MCF 10A (cell line): ENCODE measurements at regions of chr2 and their contacts with region 1.

Region 1: DNA sequence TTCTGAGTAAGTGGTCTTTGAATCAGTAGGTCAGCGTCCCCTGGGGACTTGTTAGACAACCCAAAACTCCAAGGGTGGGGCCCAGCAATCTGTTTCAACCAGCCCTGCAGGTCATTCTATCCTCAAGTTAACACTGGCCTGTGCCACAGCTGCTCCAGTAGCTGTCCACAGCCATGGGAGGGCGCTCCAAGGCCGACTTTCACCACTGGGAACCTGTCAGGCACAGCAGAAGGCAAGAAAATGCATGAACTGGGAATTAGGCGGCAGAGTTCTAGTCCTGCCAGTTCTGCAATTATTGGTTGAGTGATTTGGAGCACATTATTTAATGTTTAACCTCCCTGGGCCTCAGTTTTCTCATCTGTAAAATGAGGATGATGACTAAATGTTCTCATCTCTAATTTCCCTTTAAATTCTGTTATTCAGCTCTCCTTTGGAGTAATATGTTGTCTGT is 17.4 kb upstream of the MRPL33 start:
- DNase-seq: peak; percentile 82
- H3K4me3 Mint-ChIP-seq: peak overlapping the region; percentile 31
- H3K27ac Mint-ChIP-seq: no peak overlapping the region
- H3K4me1 Mint-ChIP-seq: peaks cover 42% of the 10 kb centered on the region
- H3K27me3 Mint-ChIP-seq: no peaks in the 10 kb centered on the region
- CTCF ChIP-seq: peak; percentile 95

Region 2: DNA sequence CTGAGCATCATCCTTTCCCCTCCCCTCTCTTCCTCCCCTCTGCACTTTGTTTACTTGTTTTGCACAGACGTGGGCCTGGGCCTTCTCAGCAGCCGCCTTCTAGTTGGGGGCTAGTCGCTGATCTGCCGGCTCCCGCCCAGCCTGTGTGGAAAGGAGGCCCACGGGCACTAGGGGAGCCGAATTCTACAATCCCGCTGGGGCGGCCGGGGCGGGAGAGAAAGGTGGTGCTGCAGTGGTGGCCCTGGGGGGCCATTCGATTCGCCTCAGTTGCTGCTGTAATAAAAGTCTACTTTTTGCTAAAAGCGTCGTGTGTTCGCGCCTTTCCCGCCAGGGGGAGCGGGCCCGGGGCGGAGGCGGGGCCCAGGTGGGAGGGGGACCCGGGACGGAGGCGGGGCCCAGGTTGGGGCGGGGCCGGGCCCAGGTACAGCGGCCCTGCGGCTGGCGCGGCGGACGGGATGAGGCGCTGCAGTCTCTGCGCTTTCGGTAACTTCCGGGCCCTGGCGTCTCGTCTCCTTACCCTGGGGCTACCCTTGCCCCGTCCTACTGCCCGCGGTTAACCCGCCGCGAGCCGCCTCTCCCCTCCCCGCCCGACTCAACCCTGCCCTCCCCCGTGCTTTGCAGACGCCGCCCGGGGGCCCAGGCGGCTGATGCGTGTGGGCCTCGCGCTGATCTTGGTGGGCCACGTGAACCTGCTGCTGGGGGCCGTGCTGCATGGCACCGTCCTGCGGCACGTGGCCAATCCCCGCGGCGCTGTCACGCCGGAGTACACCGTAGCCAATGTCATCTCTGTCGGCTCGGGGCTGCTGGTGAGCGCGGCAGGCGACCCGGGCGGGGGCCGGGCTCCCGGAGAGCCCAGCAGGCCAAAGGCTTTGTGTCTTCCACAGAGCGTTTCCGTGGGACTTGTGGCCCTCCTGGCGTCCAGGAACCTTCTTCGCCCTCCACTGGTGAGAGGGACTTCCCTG is 311.9 kb before region 1 on chr2 and contains the start of gene KRTCAP3:
- CTCF ChIA-PET with region 1: no interaction called
- POLR2A ChIA-PET with region 1: no interaction called
- intact Hi-C with region 1: no loop called
- DNase-seq: peak; percentile 35
- H3K4me3 Mint-ChIP-seq: no peak within 1 kb of the TSS
- H3K27ac Mint-ChIP-seq: peak within 1 kb of the TSS; percentile 12
- H3K4me1 Mint-ChIP-seq: peaks cover 9% of the 10 kb centered on the region
- H3K27me3 Mint-ChIP-seq: no peaks in the 10 kb centered on the region
- CTCF ChIP-seq: no peak
- total RNA-seq, gene KRTCAP3: 4.1 and 6.9 TPM in 2 replicates

Region 3: GRCh38 chr2:27672723-27673486 is 81.3 kb before region 1 on chr2:
- CTCF ChIA-PET with region 1: no interaction called
- POLR2A ChIA-PET with region 1: no interaction called
- intact Hi-C with region 1: no loop called
- DNase-seq: no peak
- H3K4me3 Mint-ChIP-seq: no peak overlapping the region
- H3K27ac Mint-ChIP-seq: no peak overlapping the region
- H3K4me1 Mint-ChIP-seq: no peaks in the 10 kb centered on the region
- H3K27me3 Mint-ChIP-seq: no peaks in the 10 kb centered on the region
- CTCF ChIP-seq: no peak

Region 4: GRCh38 chr2:27723372-27724144 is 30.6 kb before region 1 on chr2:
- CTCF ChIA-PET with region 1: interaction called, 15 read pairs
- POLR2A ChIA-PET with region 1: no interaction called
- intact Hi-C with region 1: no loop called
- DNase-seq: peak; percentile 75
- H3K4me3 Mint-ChIP-seq: no peak overlapping the region
- H3K27ac Mint-ChIP-seq: no peak overlapping the region
- H3K4me1 Mint-ChIP-seq: peaks cover 24% of the 10 kb centered on the region
- H3K27me3 Mint-ChIP-seq: no peaks in the 10 kb centered on the region
- CTCF ChIP-seq: peak; percentile 73

Region 5: DNA sequence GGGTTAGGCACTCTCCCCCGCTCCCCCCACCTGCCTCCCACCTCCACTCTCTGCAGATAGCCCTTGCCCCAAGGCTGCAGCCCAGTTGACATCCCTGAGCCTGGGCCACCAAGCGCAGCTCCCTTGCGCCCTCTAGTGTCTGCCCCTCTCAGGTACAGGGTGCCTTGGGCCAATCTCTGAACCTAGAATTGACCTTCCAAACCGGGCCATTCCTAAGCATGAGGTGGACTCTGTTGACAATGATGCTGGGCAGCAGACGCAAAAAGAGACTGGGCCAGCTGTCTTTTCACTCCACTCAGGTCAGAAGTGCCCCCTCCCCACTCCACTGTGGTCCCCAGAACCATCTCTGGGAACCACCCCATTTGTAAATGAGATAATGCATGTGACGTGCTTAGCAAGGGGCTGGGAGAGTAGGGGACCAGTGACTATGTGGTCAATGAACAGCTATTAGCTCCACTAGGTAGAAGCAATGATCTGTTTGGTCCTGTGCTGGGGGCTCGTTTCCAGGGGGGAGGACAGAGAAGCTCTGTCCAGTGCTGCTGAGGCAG is 698.4 kb after region 1 on chr2:
- CTCF ChIA-PET with region 1: interaction called, 3 read pairs
- POLR2A ChIA-PET with region 1: no interaction called
- intact Hi-C with region 1: loop called (anchors 1 kb)
- DNase-seq: peak; percentile 68
- H3K4me3 Mint-ChIP-seq: no peak overlapping the region
- H3K27ac Mint-ChIP-seq: no peak overlapping the region
- H3K4me1 Mint-ChIP-seq: peaks cover 31% of the 10 kb centered on the region
- H3K27me3 Mint-ChIP-seq: no peaks in the 10 kb centered on the region
- CTCF ChIP-seq: peak; percentile 94